Activated CD8-positive, alpha-beta memory T cell treated with anti-CD3 and anti-CD28 coated beads, Interleukin-2, amount 10 ng/mL, durations not matched to agents 7 days and 5 days (primary cell): ENCODE measurements at regions of chrX and their contacts with region 1.

Region 1: DNA sequence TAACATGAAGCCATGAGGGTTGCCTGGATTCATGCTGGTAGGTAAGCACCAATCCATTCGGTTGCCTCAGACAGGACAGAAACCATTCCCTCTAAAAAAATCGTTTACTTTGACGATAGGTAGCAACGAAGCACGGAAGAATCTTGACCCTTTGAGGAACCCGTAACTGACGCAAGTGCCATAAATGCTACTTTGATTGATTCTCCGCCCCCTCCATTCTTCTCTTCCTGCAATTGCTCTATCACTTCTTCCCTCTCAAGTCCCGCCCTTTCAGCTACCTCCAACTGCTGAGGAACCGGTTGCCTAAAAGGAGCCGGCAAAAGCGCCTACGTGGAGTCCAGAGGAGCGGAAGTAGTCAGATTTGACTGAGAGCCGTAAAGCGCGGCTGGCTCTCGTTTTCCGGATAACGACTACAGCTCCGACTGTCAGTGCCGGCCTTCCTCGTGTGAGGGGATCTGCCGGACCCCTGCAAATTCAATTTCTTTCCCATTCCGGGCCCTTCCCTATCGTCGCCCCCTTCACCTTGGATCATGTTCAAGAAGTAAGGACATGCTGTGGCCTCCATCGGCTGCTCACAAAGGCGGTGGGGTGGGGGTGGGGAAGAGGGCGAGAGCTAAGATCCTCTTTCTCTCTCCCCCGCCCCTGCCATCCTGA is at the start of gene MCTS1:
- DNase-seq: peak; percentile 91
- ATAC-seq: peak; percentile 98
- H3K4me3 Mint-ChIP-seq: peak within 1 kb of the TSS; percentile 95
- H3K27ac Mint-ChIP-seq: peak within 1 kb of the TSS; percentile 98
- H3K4me1 Mint-ChIP-seq: peaks cover 13% of the 10 kb centered on the region
- H3K27me3 Mint-ChIP-seq: no peaks in the 10 kb centered on the region
- total RNA-seq, gene MCTS1: 45.7 to 57.6 TPM

Region 2: DNA sequence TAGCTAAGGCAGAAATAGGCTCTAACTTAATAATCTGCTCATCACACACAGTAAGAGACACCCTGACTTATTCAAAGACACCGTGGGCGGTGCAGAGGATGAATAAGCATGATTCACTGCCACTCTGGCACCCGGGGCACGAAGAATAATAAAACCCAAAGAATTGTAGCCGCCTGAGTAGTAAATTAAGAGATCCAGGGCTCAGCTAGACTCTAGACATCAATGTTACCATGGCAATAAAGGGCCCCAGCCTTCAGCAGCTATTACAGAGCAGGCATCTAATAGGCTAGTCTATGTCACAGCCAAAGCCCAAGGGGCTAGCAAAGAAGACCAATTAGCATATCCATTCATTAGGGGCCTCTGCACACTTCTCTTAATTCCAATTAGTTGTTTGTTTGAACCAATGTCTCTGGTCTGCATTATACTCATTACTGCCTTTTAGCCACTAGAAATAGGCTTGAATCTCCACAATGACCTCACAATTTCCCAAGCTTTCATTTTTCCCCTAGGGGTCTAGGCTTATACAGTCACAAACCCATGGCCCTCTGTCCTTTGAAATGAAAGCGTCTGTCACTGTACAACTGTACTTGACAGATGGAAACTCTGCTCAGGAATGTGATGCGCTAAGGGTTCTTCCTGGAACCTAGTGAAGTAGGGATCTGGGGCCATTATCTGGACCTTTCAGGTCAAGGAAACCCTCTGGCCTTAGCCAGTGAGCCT is 244.9 kb before region 1 on chrX:
- CTCF ChIA-PET with region 1: no interaction called
- DNase-seq: no peak
- ATAC-seq: no peak
- H3K4me3 Mint-ChIP-seq: no peak overlapping the region
- H3K27ac Mint-ChIP-seq: no peak overlapping the region
- H3K4me1 Mint-ChIP-seq: no peaks in the 10 kb centered on the region
- H3K27me3 Mint-ChIP-seq: no peaks in the 10 kb centered on the region

Region 3: GRCh38 chrX:120560842-120561633 is 42.8 kb before region 1 on chrX and contains the start of gene CUL4B:
- CTCF ChIA-PET with region 1: interaction called, 12 read pairs
- DNase-seq: peak; percentile 95
- ATAC-seq: peak; percentile 90
- H3K4me3 Mint-ChIP-seq: peak within 1 kb of the TSS; percentile 91
- H3K27ac Mint-ChIP-seq: peak within 1 kb of the TSS; percentile 89
- H3K4me1 Mint-ChIP-seq: peaks cover 21% of the 10 kb centered on the region
- H3K27me3 Mint-ChIP-seq: no peaks in the 10 kb centered on the region
- total RNA-seq, gene CUL4B: 31.1 to 32.9 TPM

Region 4: DNA sequence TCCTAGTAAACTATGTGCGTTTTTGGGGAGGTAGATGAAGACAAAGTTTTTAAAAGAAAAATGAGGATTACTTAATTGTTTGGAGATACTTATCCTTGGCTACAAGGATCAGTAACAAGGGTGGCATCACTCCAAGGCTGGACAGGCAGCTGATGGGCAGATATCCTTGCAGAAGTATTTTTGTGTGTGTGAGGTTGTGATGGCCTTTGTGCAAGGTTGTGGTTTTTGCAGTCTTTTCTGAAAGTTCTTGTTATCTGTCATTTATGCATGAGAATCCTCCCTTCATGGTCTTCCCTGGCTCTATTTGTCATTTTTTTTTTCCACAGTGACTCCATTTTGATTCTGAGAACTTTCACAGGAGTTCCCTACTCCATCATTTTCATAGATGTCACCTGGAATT is 122.0 kb after region 1 on chrX:
- CTCF ChIA-PET with region 1: no interaction called
- DNase-seq: no peak
- ATAC-seq: no peak
- H3K4me3 Mint-ChIP-seq: no peak overlapping the region
- H3K27ac Mint-ChIP-seq: no peak overlapping the region
- H3K4me1 Mint-ChIP-seq: peaks cover 6% of the 10 kb centered on the region
- H3K27me3 Mint-ChIP-seq: no peaks in the 10 kb centered on the region